Heart right ventricle (tissue), 16 donors: ENCODE measurements at regions of chr6 and their contacts with region 1.

Region 1: GRCh38 chr6:70221025-70221714 is 81.7 kb downstream of the COL9A1 start:
- DNase-seq: no peak
- ATAC-seq: peak in 1 of 8 donors; percentile 69
- H3K4me3 ChIP-seq: no peak overlapping the region
- H3K27ac ChIP-seq: no peak overlapping the region
- H3K4me1 ChIP-seq: peaks cover 0 to 6% (median 0%) of the 10 kb centered on the region in 9 donors
- H3K27me3 ChIP-seq: peaks cover 0 to 7% (median 0%) of the 10 kb centered on the region in 7 donors
- CTCF ChIP-seq: peak; percentile 63 to 86 (median 75)

Region 2: DNA sequence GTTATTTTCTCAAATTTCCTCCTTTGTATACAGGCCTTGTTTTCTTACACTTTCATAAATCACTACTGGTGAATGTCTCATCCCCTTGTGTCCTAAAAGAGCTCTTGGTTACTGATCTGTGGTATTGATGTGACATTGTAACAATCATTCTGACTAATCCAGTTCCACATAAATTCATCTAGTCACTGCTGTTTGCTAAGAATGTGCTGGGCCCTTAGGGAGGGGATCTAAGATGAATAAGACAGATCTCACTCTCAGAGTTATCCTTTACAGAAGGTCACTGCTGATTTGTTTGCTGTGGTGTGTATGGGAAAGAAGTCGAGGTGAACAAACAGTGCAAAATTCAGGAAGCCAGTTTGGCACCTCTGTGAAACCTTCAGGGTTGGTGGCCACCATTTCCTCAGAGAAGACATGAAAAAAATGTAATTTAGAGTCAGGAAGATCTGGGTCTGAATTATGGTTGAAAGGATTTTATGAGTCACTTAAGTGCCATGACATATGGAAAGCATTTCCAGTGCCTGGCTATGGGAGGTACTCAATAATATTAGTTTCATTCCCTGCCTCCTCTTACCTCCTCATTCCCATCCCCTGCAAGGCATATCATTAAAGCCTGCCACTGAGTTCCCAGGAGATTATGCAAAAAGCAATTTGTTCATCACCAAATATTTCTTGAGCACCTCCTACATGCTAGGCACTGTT is 40.1 kb before region 1 on chr6:
- intact Hi-C with region 1: no loop called
- DNase-seq: no peak
- ATAC-seq: no peak
- H3K4me3 ChIP-seq: no peak overlapping the region
- H3K27ac ChIP-seq: no peak overlapping the region
- H3K4me1 ChIP-seq: no peaks in the 10 kb centered on the region
- H3K27me3 ChIP-seq: no peaks in the 10 kb centered on the region
- CTCF ChIP-seq: no peak

Region 3: DNA sequence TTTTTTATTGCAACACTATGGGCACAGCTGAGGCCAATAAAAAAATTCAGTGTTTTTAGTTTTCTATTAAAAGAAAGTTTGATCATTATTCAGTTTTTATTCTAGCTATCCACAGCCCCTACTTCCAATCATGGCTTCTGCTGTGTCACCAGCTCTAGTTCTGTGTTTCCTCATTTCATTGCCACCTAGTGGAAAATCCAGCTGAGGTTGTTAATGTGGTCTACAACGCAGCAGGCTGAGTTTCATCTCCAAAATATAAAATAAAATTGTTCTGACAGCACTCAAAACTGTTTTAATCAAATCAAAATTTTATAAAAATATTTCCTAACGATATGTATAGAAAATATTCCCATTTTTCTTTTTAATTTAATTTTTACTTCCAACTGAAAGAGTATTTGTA is 68.1 kb after region 1 on chr6:
- intact Hi-C with region 1: loop called in 2 of 10 experiments (anchors 5 kb)
- DNase-seq: no peak
- ATAC-seq: no peak
- H3K4me3 ChIP-seq: no peak overlapping the region
- H3K27ac ChIP-seq: no peak overlapping the region
- H3K4me1 ChIP-seq: peaks cover 0 to 6% (median 0%) of the 10 kb centered on the region in 9 donors
- H3K27me3 ChIP-seq: peaks cover 0 to 6% (median under 1%) of the 10 kb centered on the region in 7 donors
- CTCF ChIP-seq: peak in 5 of 9 donors; percentile 18 to 50 (median 29)

Region 4: GRCh38 chr6:70304616-70305015 is 83.4 kb after region 1 on chr6:
- intact Hi-C with region 1: loop called in 2 of 10 experiments (anchors 5 kb)
- DNase-seq: peak in 1 of 2 donors; percentile 27
- ATAC-seq: peak in 1 of 8 donors; percentile 49
- H3K4me3 ChIP-seq: no peak overlapping the region
- H3K27ac ChIP-seq: no peak overlapping the region
- H3K4me1 ChIP-seq: no peaks in the 10 kb centered on the region
- H3K27me3 ChIP-seq: peaks cover 0 to 25% (median 0%) of the 10 kb centered on the region in 7 donors
- CTCF ChIP-seq: no peak

Region 5: DNA sequence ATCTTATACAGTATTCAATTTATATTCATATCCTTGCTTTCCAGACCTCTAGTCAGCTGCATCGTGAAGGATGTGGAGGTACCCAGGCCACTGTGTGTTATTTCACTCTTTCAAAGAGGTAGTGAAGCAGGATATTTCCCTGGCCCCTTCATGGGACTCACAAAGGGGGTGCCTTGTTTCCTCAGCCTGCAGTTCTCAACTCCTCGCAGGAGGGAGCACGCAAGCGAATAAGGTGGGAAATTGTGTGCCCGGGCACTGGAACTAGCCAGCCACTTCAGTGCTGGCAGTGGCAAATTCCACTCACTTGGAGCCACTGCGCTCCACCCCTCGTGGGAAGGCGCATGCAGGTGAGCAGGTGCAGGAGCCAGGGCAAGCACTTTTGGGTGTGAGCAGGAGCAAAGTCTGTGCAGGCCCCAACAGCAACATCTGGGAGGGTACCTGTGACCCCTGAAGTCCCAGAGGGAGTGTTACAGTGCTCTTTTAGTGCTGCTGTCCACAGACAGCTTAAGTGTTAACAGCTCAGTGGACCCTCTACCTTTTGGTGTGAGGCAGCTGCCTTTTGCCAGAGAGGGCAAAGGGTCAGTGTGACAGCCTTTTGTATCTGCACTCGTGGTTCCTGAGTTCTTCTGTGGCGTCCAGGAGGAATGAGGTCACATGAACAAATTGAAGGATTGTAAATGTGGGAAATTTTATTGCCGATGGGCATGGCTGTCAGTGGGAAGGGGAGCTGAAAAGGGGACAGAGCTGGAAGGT is 142.7 kb after region 1 on chr6:
- intact Hi-C with region 1: loop called in 6 of 10 experiments (anchors 2 to 10 kb)
- DNase-seq: no peak
- ATAC-seq: no peak
- H3K4me3 ChIP-seq: no peak overlapping the region
- H3K27ac ChIP-seq: no peak overlapping the region
- H3K4me1 ChIP-seq: peaks cover 0 to 3% (median 0%) of the 10 kb centered on the region in 9 donors
- H3K27me3 ChIP-seq: peaks cover 0 to 8% (median 0%) of the 10 kb centered on the region in 7 donors
- CTCF ChIP-seq: no peak

Region 6: DNA sequence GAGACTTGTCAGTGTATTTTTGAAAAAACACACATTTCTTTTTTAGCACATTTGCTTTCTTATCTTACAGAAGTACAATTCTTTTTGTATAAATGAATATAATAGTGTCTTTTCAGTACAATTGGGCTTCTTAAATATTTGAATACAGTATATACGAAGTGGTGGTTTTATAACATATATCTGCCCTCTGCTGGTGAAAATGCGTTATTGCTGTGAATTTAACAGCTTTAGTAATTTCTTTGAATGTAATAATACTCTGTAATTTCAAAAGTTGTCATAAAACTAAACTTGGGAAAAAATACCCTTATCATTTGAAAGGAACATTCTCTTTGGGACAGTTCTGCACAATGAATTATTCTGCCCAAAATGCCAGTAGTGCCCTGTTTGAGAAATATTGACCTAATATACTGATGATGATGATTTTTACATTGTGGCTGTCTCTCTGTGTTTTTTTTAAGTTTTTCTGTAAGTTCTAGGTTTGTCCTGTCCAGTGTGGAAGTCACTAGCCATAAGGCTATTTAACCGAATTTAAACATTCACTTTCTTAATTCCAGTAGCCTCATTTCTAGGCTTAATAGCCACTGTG is 465.5 kb after region 1 on chr6:
- intact Hi-C with region 1: loop called in 2 of 10 experiments (anchors 5 to 10 kb)
- DNase-seq: peak in 1 of 2 donors; percentile 22
- ATAC-seq: peak in 3 of 8 donors; percentile 54 to 58 (median 56)
- H3K4me3 ChIP-seq: no peak overlapping the region
- H3K27ac ChIP-seq: no peak overlapping the region
- H3K4me1 ChIP-seq: peaks cover 0 to 41% (median 29%) of the 10 kb centered on the region in 9 donors
- H3K27me3 ChIP-seq: no peaks in the 10 kb centered on the region
- CTCF ChIP-seq: peak; percentile 61 to 86 (median 82)